Breast epithelium (tissue), 4 donors: ENCODE measurements at regions of chr15 and their contacts with region 1.

Region 1: DNA sequence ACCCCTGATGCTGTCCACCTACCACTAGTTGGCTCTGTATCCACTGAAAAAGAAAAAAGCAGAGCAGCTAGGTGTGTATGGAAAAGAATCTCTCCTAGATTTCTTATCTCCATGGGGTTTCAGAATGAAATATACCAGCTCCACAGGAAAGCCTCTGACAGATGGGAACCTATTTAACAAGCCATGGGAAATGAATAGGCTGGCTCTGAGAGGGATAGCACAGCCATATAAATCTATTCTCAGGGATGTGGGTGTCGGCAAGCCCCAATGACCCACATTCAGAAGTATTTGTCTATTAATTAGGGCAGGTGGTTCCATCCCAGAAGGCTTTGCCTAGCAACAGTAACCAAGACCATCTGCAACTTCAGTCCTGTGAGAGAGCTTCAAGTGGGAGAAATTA is 694.1 kb downstream of the AGBL1 start:
- DNase-seq: no peak
- H3K4me3 ChIP-seq: no peak overlapping the region
- H3K27ac ChIP-seq: no peak overlapping the region
- H3K4me1 ChIP-seq: no peaks in the 10 kb centered on the region
- H3K27me3 ChIP-seq: no peaks in the 10 kb centered on the region
- CTCF ChIP-seq: no peak
- POLR2A ChIP-seq: no peak

Region 2: GRCh38 chr15:85361323-85361722 is 1412.4 kb before region 1 on chr15:
- intact Hi-C with region 1: no loop called
- DNase-seq: no peak
- H3K4me3 ChIP-seq: no peak overlapping the region
- H3K27ac ChIP-seq: no peak overlapping the region
- H3K4me1 ChIP-seq: no peaks in the 10 kb centered on the region
- H3K27me3 ChIP-seq: no peaks in the 10 kb centered on the region
- CTCF ChIP-seq: no peak
- POLR2A ChIP-seq: no peak

Region 3: DNA sequence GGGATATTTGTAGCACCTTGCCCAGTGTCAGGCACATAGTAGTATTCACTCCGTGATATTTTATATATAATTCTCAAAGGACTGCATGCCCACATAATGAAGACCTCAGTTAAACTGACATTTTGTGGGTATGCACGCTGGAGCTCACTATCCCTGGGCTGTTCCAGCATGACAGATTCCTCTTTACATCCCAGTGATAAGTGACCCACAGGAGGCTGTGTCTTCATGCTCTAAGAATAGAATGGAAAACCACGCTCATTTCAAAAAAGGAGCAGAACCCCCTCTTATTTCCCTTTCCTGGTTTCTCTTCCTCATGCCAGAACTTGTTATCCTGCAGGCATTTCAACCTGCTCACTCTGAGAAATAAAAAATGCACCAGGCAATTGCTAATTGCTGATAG is 23.4 kb after region 1 on chr15:
- intact Hi-C with region 1: no loop called
- DNase-seq: no peak
- H3K4me3 ChIP-seq: no peak overlapping the region
- H3K27ac ChIP-seq: no peak overlapping the region
- H3K4me1 ChIP-seq: no peaks in the 10 kb centered on the region
- H3K27me3 ChIP-seq: no peaks in the 10 kb centered on the region
- CTCF ChIP-seq: no peak
- POLR2A ChIP-seq: no peak

Region 4: DNA sequence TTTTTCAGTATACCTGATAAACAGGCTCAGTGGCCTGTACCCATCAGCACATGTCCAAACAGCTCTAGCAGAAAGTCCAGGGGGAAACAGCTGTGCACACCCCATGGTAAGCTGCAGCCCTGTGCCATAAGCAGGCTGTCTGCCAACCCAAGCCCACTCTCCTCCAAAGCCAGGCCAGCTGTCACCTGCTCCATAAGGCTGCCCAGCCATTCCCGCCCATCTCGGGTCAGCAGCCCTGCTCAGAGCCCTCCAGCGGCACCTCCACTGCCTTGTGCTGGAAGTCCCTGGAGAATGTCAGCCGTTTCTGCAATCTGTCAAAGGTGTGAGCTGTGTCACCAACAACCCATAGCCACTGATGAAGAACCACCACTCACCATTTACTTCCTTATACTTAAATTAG is 1400.8 kb after region 1 on chr15:
- intact Hi-C with region 1: loop called (anchors 5 kb)
- DNase-seq: no peak
- H3K4me3 ChIP-seq: no peak overlapping the region
- H3K27ac ChIP-seq: no peak overlapping the region
- H3K4me1 ChIP-seq: no peaks in the 10 kb centered on the region
- H3K27me3 ChIP-seq: no peaks in the 10 kb centered on the region
- CTCF ChIP-seq: no peak
- POLR2A ChIP-seq: no peak